GM12878 (cell line): ENCODE measurements at regions of chr3 and their contacts with region 1.

Region 1: GRCh38 chr3:138915503-138916498 is 31.1 kb downstream of the FOXL2 start:
- DNase-seq: peak; percentile 34
- ATAC-seq: peak; percentile 97
- H3K4me3 ChIP-seq: peak overlapping the region; percentile 85
- H3K27ac ChIP-seq: peak overlapping the region; percentile 46; the same call in 1 of the 2 replicates
- H3K4me1 ChIP-seq: peaks cover 3% of the 10 kb centered on the region; the same call in 1 of the 2 replicates
- H3K27me3 ChIP-seq: peaks cover 0 to 4% of the 10 kb centered on the region in 2 experiments; a peak in 2 of 4 replicates
- CTCF ChIP-seq: peak; percentile 67 to 85 (median 82)
- EP300 ChIP-seq: no peak
- POLR2A ChIP-seq: 0 out of 2 replicates have a peak, but pooled peaks have one; percentile 25
- RAD21 ChIP-seq: peak; percentile 80

Region 2: GRCh38 chr3:138417559-138417982 is 498.2 kb before region 1 on chr3:
- CTCF ChIA-PET with region 1: interaction called, 51 read pairs
- POLR2A ChIA-PET with region 1: no interaction called
- RAD21 ChIA-PET with region 1: interaction called, 9 read pairs
- SMC1A ChIA-PET with region 1: interaction called, 5 read pairs
- in situ Hi-C with region 1: loop called (anchors 5 kb)
- intact Hi-C with region 1: no loop called
- DNase-seq: no peak
- ATAC-seq: peak; percentile 98
- H3K4me3 ChIP-seq: no peak overlapping the region
- H3K27ac ChIP-seq: no peak overlapping the region
- H3K4me1 ChIP-seq: no peaks in the 10 kb centered on the region
- H3K27me3 ChIP-seq: peaks cover 0 to 2% of the 10 kb centered on the region in 2 experiments; a peak in 1 of 4 replicates
- CTCF ChIP-seq: peak; percentile 85 to 91 (median 89)
- EP300 ChIP-seq: no peak
- POLR2A ChIP-seq: no peak
- RAD21 ChIP-seq: peak; percentile 67

Region 3: GRCh38 chr3:138594150-138594934 is 321.5 kb before region 1 on chr3 and contains the start of gene CEP70:
- CTCF ChIA-PET with region 1: interaction called, 451 read pairs
- POLR2A ChIA-PET with region 1: interaction called, 15 read pairs
- RAD21 ChIA-PET with region 1: interaction called, 166 read pairs
- SMC1A ChIA-PET with region 1: interaction called, 132 read pairs
- in situ Hi-C with region 1: loop called (anchors 5 kb)
- intact Hi-C with region 1: loop called (anchors 1 kb)
- DNase-seq: peak; percentile 78
- ATAC-seq: peak; percentile 95
- H3K4me3 ChIP-seq: peak within 1 kb of the TSS; percentile 62
- H3K27ac ChIP-seq: peak within 1 kb of the TSS; percentile 24; the same call in 1 of the 2 replicates
- H3K4me1 ChIP-seq: peaks cover 10% of the 10 kb centered on the region
- H3K27me3 ChIP-seq: no peaks in the 10 kb centered on the region; a peak in 1 of 4 replicates
- CTCF ChIP-seq: peak; percentile 72 to 91 (median 90)
- EP300 ChIP-seq: no peak
- POLR2A ChIP-seq: peak; percentile 77
- RAD21 ChIP-seq: peak; percentile 91
- polyA plus RNA-seq, gene CEP70: 1.8 to 1.9 TPM

Region 4: DNA sequence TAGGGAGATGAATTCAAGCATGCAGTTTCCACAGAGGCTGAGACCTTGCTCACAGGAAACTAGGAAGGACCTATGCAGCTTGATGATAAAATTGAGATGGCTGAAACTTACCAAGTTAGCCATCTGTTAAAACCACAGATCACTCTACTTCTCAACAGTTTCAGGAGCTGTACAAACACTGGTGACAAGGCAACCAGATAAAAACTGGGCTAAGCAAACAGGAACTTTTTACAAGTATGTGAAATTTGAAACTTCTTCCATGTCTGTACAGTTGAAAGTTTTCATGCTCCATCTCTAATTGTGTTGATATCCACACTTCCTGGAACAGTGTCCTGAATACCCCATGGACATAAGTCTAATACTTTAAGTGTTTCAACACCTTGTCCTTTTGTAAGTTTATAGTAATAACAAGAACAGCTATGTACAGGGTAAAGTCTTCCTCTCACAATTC is 229.0 kb before region 1 on chr3:
- CTCF ChIA-PET with region 1: interaction called, 43 read pairs
- POLR2A ChIA-PET with region 1: interaction called, 6 read pairs
- RAD21 ChIA-PET with region 1: interaction called, 50 read pairs
- SMC1A ChIA-PET with region 1: interaction called, 16 read pairs
- in situ Hi-C with region 1: no loop called
- intact Hi-C with region 1: no loop called
- DNase-seq: peak; percentile 82
- ATAC-seq: peak; percentile 99
- H3K4me3 ChIP-seq: no peak overlapping the region
- H3K27ac ChIP-seq: peak overlapping the region; percentile 53; the same call in 1 of the 2 replicates
- H3K4me1 ChIP-seq: peaks cover 14% of the 10 kb centered on the region
- H3K27me3 ChIP-seq: no peaks in the 10 kb centered on the region
- CTCF ChIP-seq: no peak
- EP300 ChIP-seq: peak; percentile 56 to 76; a peak in 1 of 4 replicates
- POLR2A ChIP-seq: no peak
- RAD21 ChIP-seq: no peak

Region 5: DNA sequence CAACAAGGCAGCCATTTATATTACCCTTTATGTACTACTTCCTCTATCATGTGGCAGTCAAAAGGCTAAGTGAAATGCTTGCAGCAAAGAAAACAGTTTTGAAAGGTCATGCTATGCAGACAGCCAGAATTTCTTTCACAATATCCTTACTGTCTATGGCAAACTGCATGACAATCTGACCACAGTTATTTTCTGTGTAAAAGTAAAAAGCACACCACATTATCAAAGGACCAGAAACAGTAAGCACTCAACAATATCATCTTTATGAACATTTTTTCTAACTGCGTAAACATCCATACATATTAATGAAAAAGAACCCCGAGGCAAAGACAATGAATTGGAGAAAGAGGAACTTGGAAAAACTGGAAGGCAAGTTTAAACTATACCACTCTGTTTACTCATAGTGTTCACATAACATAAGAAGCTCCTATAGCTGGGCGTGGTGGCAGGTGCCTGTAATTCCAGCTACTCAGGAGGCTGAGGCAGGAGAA is 129.0 kb before region 1 on chr3:
- CTCF ChIA-PET with region 1: interaction called, 8 read pairs
- POLR2A ChIA-PET with region 1: no interaction called
- RAD21 ChIA-PET with region 1: interaction called, 7 read pairs
- SMC1A ChIA-PET with region 1: no interaction called
- in situ Hi-C with region 1: no loop called
- intact Hi-C with region 1: loop called (anchors 5 kb)
- DNase-seq: no peak
- ATAC-seq: peak; percentile 15; the same call in 1 of the 3 replicates
- H3K4me3 ChIP-seq: no peak overlapping the region
- H3K27ac ChIP-seq: no peak overlapping the region
- H3K4me1 ChIP-seq: peaks cover 9% of the 10 kb centered on the region
- H3K27me3 ChIP-seq: no peaks in the 10 kb centered on the region
- CTCF ChIP-seq: no peak
- EP300 ChIP-seq: no peak
- POLR2A ChIP-seq: no peak
- RAD21 ChIP-seq: no peak

Region 6: DNA sequence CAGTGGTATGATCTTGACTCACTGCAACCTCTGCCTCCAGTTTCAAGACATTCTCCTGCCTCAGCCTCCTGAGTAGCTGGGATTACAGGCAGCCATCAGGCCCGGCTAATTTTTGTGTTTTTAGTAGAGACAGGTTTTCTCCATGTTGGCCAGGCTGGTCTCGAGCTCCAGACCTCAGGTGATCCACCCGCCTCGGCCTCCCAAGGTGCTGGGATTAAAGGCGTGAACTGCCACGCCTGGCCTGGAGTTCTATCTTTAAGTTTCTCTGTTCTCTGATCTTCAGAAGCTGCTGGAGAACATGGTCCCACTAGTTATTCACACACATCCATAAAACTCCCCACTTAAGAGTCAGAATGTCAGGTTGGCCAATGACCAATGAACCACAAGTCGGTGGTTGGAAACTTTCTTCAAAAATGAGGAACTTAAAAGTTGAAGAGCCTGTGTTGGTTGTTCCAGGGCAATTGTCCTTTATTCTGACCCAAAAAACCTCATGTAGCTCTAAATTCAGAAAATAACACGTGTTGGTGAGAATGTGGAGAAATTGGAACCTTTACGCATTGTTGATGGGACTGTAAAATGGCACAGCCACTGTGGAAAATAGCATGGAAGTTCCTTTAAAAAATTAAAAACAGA is 25.1 kb before region 1 on chr3:
- CTCF ChIA-PET with region 1: interaction called, 15 read pairs
- POLR2A ChIA-PET with region 1: no interaction called
- RAD21 ChIA-PET with region 1: interaction called, 7 read pairs
- SMC1A ChIA-PET with region 1: interaction called, 6 read pairs
- in situ Hi-C with region 1: no loop called
- intact Hi-C with region 1: no loop called
- DNase-seq: peak; percentile 57
- ATAC-seq: peak; percentile 84
- H3K4me3 ChIP-seq: no peak overlapping the region
- H3K27ac ChIP-seq: no peak overlapping the region
- H3K4me1 ChIP-seq: peaks cover 3% of the 10 kb centered on the region; the same call in 1 of the 2 replicates
- H3K27me3 ChIP-seq: no peaks in the 10 kb centered on the region
- CTCF ChIP-seq: no peak
- EP300 ChIP-seq: peak; percentile 30 to 34; a peak in 1 of 4 replicates
- POLR2A ChIP-seq: no peak
- RAD21 ChIP-seq: no peak